ENCODE measurements at regions of chr5 and their contacts with region 1.

Region 1: DNA sequence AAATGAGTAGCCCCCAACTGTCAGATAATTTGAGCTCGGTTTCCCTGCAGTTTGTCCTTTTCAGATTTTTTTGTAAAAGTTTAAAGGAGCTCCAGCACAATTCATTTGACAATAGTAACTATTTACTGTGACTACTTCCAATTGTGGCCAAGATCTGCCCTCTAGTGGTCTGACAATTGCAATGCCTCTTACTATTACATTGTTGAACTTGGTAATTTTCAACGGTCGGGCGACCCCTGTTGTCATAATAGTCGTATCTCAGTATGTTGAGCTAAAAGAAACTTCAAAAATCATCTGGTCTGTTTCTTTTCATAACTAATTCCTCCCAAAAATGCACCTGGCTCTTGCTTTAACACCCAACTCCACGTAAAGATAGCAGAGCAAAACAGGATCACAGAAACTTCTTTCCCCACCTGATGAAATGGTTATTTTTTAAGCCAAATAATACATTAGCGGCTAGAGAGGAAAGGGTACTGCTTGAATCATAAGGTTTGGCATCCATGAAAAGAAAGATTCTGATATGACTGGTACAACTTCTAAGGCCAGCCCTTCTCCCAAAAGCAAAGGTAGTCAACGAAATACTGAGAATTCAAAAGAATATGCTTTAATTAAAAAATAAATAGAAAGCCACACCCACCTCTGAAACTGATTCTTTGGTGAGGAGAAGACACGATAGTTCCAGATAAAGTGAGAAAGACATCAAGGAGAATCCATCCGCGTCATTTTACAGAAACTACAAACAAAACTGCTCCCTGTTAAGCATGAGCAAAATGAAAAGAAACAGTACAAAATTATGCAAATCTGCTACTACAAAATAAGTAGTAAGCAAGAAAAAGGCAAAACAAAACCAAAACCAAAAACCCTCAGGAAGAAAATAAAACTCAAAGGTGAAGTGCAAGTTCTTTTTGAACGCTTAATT is 76.9 kb upstream of the HTR4 start:
- DNase-seq: peak; percentile 76 to 79
- ATAC-seq: peak; percentile 92
- H3K4me3 ChIP-seq: peak overlapping the region in 1 of 2 donors; percentile 32
- H3K27ac ChIP-seq: no peak overlapping the region
- H3K4me1 ChIP-seq: peaks cover 0 to 3% of the 10 kb centered on the region in 2 donors
- H3K27me3 ChIP-seq: no peaks in the 10 kb centered on the region

Region 2: GRCh38 chr5:148186248-148186996 is 544.8 kb before region 1 on chr5:
- intact Hi-C with region 1: loop called in 1 of 2 experiments (anchors 10 kb)
- DNase-seq: no peak
- ATAC-seq: peak; percentile 38
- H3K4me3 ChIP-seq: no peak overlapping the region
- H3K27ac ChIP-seq: no peak overlapping the region
- H3K4me1 ChIP-seq: no peaks in the 10 kb centered on the region
- H3K27me3 ChIP-seq: no peaks in the 10 kb centered on the region

Region 3: GRCh38 chr5:148482691-148483462 is 248.3 kb before region 1 on chr5:
- intact Hi-C with region 1: loop called in 1 of 2 experiments (anchors 5 kb)
- DNase-seq: peak; percentile 71 to 79
- ATAC-seq: peak; percentile 67
- H3K4me3 ChIP-seq: no peak overlapping the region
- H3K27ac ChIP-seq: no peak overlapping the region
- H3K4me1 ChIP-seq: peaks cover 0 to 2% of the 10 kb centered on the region in 2 donors
- H3K27me3 ChIP-seq: no peaks in the 10 kb centered on the region

Region 4: DNA sequence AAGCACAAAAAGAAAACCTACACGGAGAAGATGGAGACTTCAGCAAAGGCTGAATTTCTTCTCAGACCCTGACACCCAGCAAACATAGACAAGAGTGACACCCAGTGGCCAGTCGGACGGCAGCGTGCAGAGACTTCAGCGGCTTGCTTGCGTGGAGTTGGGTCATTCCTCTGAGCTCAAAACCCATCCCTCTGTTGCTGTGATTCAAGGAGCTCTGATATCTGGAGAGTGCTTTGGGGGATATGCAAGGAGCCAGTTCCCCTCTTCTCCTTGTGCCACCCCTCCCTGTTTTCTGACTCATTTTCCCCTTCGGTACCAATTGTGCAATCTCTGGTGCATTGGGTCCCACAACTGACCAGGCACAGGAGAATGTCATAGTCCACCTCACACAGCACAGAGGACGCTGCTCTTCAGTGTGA is 304.2 kb after region 1 on chr5:
- intact Hi-C with region 1: loop called (anchors 2 kb)
- DNase-seq: peak; percentile 77 to 87
- ATAC-seq: peak; percentile 84
- H3K4me3 ChIP-seq: no peak overlapping the region
- H3K27ac ChIP-seq: no peak overlapping the region
- H3K4me1 ChIP-seq: no peaks in the 10 kb centered on the region
- H3K27me3 ChIP-seq: no peaks in the 10 kb centered on the region

Measured in aorta (tissue), 5 donors.